CD8-positive, alpha-beta T cell (primary cell): ENCODE measurements at regions of chr2 and their contacts with region 1.

Region 1: GRCh38 chr2:68467077-68467960 is at the starts of genes APLF and FBXO48:
- DNase-seq: peak; percentile 96 to 99 (median 98)
- ATAC-seq: peak; percentile 87
- H3K4me3 ChIP-seq: peak within 1 kb of the TSS; percentile 83 to 88
- H3K4me3 Mint-ChIP-seq: peak within 1 kb of the TSS; percentile 96
- H3K27ac ChIP-seq: peak within 1 kb of the TSS; percentile 82 to 89
- H3K27ac Mint-ChIP-seq: peak within 1 kb of the TSS; percentile 97
- H3K4me1 ChIP-seq: peaks cover 26% of the 10 kb centered on the region
- H3K4me1 Mint-ChIP-seq: peaks cover 44% of the 10 kb centered on the region
- H3K27me3 ChIP-seq: no peaks in the 10 kb centered on the region
- H3K27me3 Mint-ChIP-seq: no peaks in the 10 kb centered on the region
- CTCF ChIP-seq: no peak
- total RNA-seq, gene APLF: 4.1 to 4.2 TPM
- total RNA-seq, gene FBXO48: 0.22 to 0.30 TPM

Region 2: GRCh38 chr2:68452168-68452900 is 15.0 kb before region 1 on chr2:
- CTCF ChIA-PET with region 1: interaction called, 29 read pairs
- POLR2A ChIA-PET with region 1: interaction called, 17 read pairs
- intact Hi-C with region 1: no loop called
- DNase-seq: peak in 2 of 9 experiments; percentile 44 to 68
- ATAC-seq: peak; percentile 52
- H3K4me3 ChIP-seq: no peak overlapping the region
- H3K4me3 Mint-ChIP-seq: no peak overlapping the region
- H3K27ac ChIP-seq: no peak overlapping the region
- H3K27ac Mint-ChIP-seq: no peak overlapping the region
- H3K4me1 ChIP-seq: peaks cover 19% of the 10 kb centered on the region
- H3K4me1 Mint-ChIP-seq: peaks cover 18% of the 10 kb centered on the region
- H3K27me3 ChIP-seq: no peaks in the 10 kb centered on the region
- H3K27me3 Mint-ChIP-seq: no peaks in the 10 kb centered on the region
- CTCF ChIP-seq: no peak

Region 3: GRCh38 chr2:68594674-68595492 is 127.6 kb after region 1 on chr2:
- CTCF ChIA-PET with region 1: interaction called, 124 read pairs
- POLR2A ChIA-PET with region 1: interaction called, 6 read pairs
- intact Hi-C with region 1: loop called (anchors 1 kb)
- DNase-seq: peak; percentile 12 to 74 (median 54)
- ATAC-seq: peak; percentile 48
- H3K4me3 ChIP-seq: no peak overlapping the region
- H3K4me3 Mint-ChIP-seq: peak overlapping the region; percentile 17
- H3K27ac ChIP-seq: no peak overlapping the region
- H3K27ac Mint-ChIP-seq: no peak overlapping the region
- H3K4me1 ChIP-seq: no peaks in the 10 kb centered on the region
- H3K4me1 Mint-ChIP-seq: peaks cover 6% of the 10 kb centered on the region
- H3K27me3 ChIP-seq: no peaks in the 10 kb centered on the region
- H3K27me3 Mint-ChIP-seq: no peaks in the 10 kb centered on the region
- CTCF ChIP-seq: peak; percentile 96

Region 4: DNA sequence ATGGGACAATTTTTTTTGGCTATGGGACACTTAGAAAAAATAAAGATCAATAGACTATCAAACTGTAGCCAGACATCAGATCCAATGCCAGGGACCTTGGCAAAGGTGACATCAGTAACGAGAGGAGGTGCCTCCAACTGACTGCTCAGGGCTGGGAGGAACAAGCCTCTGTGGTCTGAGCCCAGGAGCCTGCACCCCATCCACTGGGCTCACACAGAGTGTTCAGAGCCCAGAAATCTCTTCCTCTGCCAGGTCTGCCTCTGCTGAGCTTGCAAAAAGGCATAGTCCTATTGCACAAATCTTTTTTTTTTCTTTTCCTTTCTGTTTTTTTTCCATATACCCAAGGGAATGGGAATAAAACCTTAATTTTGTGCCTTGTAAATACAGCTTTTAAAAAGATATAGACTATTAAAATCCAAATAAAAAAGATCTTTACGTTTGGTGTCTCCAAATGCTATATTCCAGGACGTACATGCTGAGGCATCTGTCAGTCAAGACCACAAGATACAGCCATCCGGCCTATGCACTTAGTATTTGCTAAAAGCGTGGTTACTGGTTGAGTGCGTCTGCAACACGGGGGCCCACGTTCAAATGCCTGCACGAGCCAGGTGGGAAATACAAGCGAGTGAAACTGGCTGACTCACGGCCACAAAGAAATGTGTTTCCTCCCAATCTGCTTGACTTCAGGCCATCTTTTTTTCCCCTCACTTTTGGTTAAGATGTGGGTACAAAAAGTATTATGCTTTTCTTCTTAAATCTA is 259.5 kb after region 1 on chr2:
- CTCF ChIA-PET with region 1: interaction called, 10 read pairs
- POLR2A ChIA-PET with region 1: no interaction called
- intact Hi-C with region 1: loop called in 1 of 2 experiments (anchors 5 kb)
- DNase-seq: peak; percentile 48 to 92 (median 81)
- ATAC-seq: peak; percentile 98
- H3K4me3 ChIP-seq: no peak overlapping the region
- H3K4me3 Mint-ChIP-seq: peak overlapping the region; percentile 22
- H3K27ac ChIP-seq: peak overlapping the region in 1 of 2 experiments; percentile 60
- H3K27ac Mint-ChIP-seq: peak overlapping the region; percentile 82
- H3K4me1 ChIP-seq: peaks cover 37% of the 10 kb centered on the region
- H3K4me1 Mint-ChIP-seq: peaks cover 54% of the 10 kb centered on the region
- H3K27me3 ChIP-seq: no peaks in the 10 kb centered on the region
- H3K27me3 Mint-ChIP-seq: no peaks in the 10 kb centered on the region
- CTCF ChIP-seq: no peak

Region 5: DNA sequence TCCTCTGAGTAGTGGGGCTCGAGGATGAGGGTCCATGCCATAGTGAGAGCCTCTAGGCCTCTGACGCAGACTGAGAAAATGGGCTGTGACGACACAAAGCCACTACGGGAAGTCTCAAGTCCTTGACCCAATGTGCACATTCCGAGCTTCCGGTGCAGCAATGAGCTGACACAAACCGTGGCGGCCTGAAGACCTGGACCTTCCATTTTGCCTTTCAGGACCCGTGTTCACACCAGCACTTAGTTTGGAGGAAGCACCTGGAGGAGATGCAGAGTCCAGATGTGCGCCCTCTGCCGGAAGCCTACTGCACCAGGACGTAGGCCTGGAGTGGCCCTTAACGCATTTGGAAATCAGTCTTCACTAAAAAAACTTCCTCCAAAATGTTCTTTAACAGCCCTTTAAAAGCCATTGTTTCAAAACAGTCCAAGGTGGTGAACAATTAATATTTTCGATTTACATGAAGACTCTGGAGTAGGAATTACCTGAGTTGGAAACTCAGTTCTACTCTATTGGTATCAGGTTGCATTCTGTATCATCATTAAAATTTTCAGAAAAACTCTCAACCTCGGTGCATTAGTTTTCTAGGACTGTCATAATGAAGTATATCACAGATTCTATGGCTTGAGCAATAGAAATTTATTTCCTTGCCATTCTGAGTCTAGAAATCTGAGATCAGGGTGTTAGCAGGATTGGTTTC is 370.0 kb after region 1 on chr2:
- CTCF ChIA-PET with region 1: interaction called, 10 read pairs
- POLR2A ChIA-PET with region 1: no interaction called
- intact Hi-C with region 1: loop called (anchors 2 kb)
- DNase-seq: peak; percentile 39 to 83 (median 73)
- ATAC-seq: peak; percentile 74
- H3K4me3 ChIP-seq: no peak overlapping the region
- H3K4me3 Mint-ChIP-seq: no peak overlapping the region
- H3K27ac ChIP-seq: no peak overlapping the region
- H3K27ac Mint-ChIP-seq: no peak overlapping the region
- H3K4me1 ChIP-seq: peaks cover 8% of the 10 kb centered on the region
- H3K4me1 Mint-ChIP-seq: peaks cover 23% of the 10 kb centered on the region
- H3K27me3 ChIP-seq: no peaks in the 10 kb centered on the region
- H3K27me3 Mint-ChIP-seq: no peaks in the 10 kb centered on the region
- CTCF ChIP-seq: peak; percentile 82

Region 6: GRCh38 chr2:68925295-68925896 is 458.1 kb after region 1 on chr2:
- CTCF ChIA-PET with region 1: interaction called, 114 read pairs
- POLR2A ChIA-PET with region 1: interaction called, 5 read pairs
- intact Hi-C with region 1: loop called (anchors 1 kb)
- DNase-seq: peak; percentile 18 to 80 (median 56)
- ATAC-seq: peak; percentile 87
- H3K4me3 ChIP-seq: no peak overlapping the region
- H3K4me3 Mint-ChIP-seq: no peak overlapping the region
- H3K27ac ChIP-seq: no peak overlapping the region
- H3K27ac Mint-ChIP-seq: no peak overlapping the region
- H3K4me1 ChIP-seq: no peaks in the 10 kb centered on the region
- H3K4me1 Mint-ChIP-seq: no peaks in the 10 kb centered on the region
- H3K27me3 ChIP-seq: no peaks in the 10 kb centered on the region
- H3K27me3 Mint-ChIP-seq: peaks cover 2% of the 10 kb centered on the region
- CTCF ChIP-seq: peak; percentile 98